ENCODE measurements at regions of chr10 and their contacts with region 1.

Region 1: GRCh38 chr10:101818119-101818871 is at the start of gene OGA:
- DNase-seq: peak; percentile 93 to 100 (median 98)
- ATAC-seq: peak; percentile 90 to 91
- H3K4me3 Mint-ChIP-seq: peak within 1 kb of the TSS; percentile 94 to 100 (median 98)
- H3K27ac Mint-ChIP-seq: peak within 1 kb of the TSS; percentile 96 to 99 (median 98)
- H3K4me1 Mint-ChIP-seq: peaks cover 37 to 59% (median 46%) of the 10 kb centered on the region in 4 donors
- H3K27me3 Mint-ChIP-seq: peaks cover 0 to 2% (median 0%) of the 10 kb centered on the region in 5 donors
- polyA plus RNA-seq, gene OGA: 35.7 to 43.7 (median 41.9) TPM

Region 2: DNA sequence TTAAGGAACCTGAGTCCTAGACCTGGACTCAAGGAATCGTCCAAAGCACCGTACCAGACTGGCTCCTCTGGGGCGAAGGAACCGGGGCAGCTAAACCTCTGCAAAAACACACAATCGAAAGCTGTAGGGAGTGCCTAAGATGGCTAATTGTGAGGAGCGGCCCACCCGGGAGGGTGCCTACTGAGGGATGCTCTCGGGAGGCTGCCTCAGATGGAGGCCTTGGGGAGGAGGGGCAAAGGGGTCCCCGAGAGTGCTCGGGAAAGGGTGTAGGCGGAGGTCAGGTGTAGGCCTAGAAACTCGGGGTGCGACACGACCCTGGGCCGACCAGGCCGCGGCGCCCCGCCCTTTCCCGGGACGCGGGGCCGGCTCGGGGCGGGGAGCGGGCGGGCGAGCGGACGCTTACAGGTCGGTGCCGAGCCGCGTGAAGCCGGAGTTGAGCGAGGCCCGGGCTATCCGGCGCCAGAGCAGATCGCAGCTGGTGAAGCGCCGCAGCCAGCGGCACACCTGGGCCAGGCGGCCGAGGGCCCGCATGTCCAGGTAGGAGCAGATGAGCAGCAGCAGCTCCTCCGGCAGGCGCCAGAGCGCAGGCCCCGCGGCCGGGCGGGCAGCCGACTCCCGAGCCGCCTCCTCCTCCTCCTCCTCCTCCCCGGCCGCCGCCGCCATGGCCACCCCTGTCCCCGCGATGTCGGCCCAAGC is 124.2 kb before region 1 on chr10:
- POLR2A ChIA-PET with region 1: interaction called, 10 read pairs
- DNase-seq: peak; percentile 53 to 83 (median 71)
- ATAC-seq: peak; percentile 61 to 72
- H3K4me3 Mint-ChIP-seq: peak overlapping the region; percentile 94 to 99 (median 96)
- H3K27ac Mint-ChIP-seq: peak overlapping the region; percentile 96 to 100 (median 99)
- H3K4me1 Mint-ChIP-seq: peaks cover 18 to 50% (median 45%) of the 10 kb centered on the region in 4 donors
- H3K27me3 Mint-ChIP-seq: no peaks in the 10 kb centered on the region

Region 3: DNA sequence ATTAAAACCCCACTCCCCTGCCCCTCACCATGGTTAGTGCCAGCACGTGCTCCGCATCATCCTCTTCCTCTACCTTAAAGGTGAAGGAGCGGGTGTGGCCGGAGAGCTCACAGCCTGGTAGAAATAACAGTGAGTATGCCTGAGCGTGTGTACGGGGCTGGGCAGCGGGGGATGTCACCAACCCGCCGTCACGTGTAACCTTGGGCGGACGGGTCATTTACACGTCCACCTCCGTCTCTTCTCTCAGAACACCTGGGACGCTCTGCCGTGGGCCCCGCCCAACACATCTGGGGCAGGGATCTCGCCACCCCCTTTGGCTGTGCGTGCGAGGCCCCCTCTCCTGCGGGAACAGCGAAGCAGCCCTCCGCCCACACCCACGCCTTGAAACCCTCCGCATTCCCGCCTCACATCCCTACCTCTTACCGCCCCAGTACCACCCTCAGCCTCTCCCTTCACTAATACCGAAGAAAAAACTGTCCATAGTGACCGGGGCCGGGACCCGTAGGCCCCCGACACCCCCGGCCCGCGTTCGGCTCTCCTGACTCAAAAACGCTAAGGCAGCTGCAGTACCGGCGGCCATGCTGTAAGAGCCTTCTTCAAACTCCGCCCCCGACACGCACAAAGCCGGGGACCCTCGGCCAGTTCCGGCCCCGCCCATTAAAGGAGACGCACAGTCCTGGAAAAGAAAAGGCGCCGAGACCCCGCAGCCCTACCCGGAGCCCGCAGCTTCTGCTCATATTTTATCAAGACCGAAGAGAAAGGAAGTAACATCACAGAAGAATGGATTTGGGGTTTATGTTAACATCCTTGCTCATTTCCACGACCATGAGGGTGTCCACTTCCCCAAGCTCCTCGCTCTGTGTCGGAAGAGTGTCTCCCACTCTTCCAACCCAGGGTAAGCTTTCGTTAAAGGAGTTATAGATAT is 35.2 kb before region 1 on chr10 and contains the start of gene NPM3:
- POLR2A ChIA-PET with region 1: interaction called, 29 read pairs
- DNase-seq: peak; percentile 70 to 87 (median 76)
- ATAC-seq: peak; percentile 77 to 80
- H3K4me3 Mint-ChIP-seq: peak within 1 kb of the TSS; percentile 94 to 100 (median 100)
- H3K27ac Mint-ChIP-seq: peak within 1 kb of the TSS; percentile 90 to 99 (median 97)
- H3K4me1 Mint-ChIP-seq: peaks cover 37 to 74% (median 64%) of the 10 kb centered on the region in 4 donors
- H3K27me3 Mint-ChIP-seq: peaks cover 4 to 16% (median 9%) of the 10 kb centered on the region in 5 donors
- polyA plus RNA-seq, gene NPM3: 14.6 to 19.3 (median 18.9) TPM

Region 4: GRCh38 chr10:101807158-101807557 is 11.1 kb before region 1 on chr10:
- POLR2A ChIA-PET with region 1: interaction called, 15 read pairs
- DNase-seq: no peak
- ATAC-seq: no peak
- H3K4me3 Mint-ChIP-seq: no peak overlapping the region
- H3K27ac Mint-ChIP-seq: peak overlapping the region in 5 of 10 donors; percentile 23 to 76 (median 47)
- H3K4me1 Mint-ChIP-seq: peaks cover 5 to 42% (median 35%) of the 10 kb centered on the region in 4 donors
- H3K27me3 Mint-ChIP-seq: no peaks in the 10 kb centered on the region

Region 5: DNA sequence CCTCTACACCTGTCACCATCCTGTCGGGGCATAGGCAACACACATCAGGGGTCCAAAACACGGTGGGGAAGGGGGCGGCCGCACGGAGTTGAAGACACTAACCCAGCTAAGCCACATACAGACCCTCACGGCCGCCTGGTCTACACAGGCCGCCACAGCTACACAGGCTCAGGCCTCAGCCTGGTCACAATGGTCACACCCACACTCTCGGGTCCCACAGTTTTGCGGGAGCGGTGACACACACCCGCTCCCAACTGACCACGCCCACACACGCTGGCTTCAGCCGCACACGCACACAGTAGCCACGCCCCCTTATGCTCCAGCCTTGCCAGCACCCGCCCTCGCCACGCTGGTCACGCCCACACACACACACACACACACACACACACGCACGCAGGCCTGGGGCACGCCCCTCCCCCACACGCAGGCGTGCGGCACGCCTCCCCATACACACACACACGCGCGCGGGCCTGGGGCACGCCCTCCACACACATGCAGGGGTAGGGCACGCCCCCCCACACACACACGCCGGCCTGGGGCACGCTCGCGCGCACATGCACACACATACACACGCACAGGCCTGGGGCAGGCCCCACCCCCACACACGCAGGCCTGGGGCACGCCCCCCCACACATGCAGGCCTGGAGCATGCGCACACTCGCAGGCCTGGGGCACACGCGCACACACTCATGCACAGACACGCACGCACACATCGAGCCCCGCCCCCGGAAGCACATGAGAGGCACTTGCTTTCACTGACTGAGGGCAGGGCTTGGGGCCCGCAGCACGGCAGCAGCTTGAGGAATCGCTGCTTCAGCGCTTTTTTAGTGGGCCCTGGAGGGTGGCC is 12.2 kb after region 1 on chr10:
- POLR2A ChIA-PET with region 1: interaction called, 118 read pairs
- DNase-seq: peak; percentile 87 to 98 (median 95)
- ATAC-seq: peak; percentile 80 to 81
- H3K4me3 Mint-ChIP-seq: peak overlapping the region; percentile 74 to 96 (median 90)
- H3K27ac Mint-ChIP-seq: peak overlapping the region; percentile 94 to 100 (median 99)
- H3K4me1 Mint-ChIP-seq: peaks cover 44 to 64% (median 52%) of the 10 kb centered on the region in 4 donors
- H3K27me3 Mint-ChIP-seq: peaks cover 0 to 3% (median 0%) of the 10 kb centered on the region in 5 donors

Region 6: DNA sequence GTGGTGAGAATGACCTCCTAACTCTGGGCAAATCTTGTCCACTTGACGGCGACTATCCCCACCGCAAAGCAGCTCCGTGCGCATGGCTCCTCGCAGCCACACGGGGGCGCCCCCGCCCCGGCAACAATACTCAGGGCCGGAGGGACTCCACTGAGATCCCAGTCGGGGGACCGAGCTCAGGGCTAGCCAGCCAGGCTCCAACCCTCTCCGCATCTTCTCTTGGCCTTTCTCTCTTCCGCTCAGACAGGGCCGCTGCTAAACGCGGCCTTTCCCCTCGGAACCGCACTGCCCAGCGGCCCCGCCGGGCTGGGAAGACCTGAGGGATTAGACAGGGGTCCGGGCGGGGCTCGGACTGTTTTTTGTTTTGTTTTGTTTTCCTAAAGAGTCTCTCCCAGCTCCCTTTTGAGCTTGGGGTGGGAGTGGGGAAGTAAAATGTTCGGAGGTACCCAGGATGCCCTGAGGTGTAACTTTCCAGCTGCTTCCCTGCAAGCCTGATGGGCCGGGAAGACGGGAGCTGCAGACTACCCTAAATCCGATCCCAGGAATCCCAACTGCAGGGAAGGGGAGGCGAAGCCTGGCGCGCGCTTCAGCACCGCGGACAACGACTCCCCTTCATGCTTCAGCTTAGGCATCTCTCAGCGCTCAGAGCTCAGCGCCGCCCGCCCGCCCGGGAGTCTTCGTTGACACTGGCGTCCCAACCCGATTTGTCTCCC is 22.6 kb after region 1 on chr10:
- POLR2A ChIA-PET with region 1: interaction called, 50 read pairs
- DNase-seq: peak; percentile 39 to 79 (median 60)
- ATAC-seq: peak; percentile 58 to 59
- H3K4me3 Mint-ChIP-seq: peak overlapping the region; percentile 72 to 94 (median 90)
- H3K27ac Mint-ChIP-seq: peak overlapping the region in 7 of 10 donors; percentile 47 to 84 (median 68)
- H3K4me1 Mint-ChIP-seq: peaks cover 40 to 71% (median 55%) of the 10 kb centered on the region in 4 donors
- H3K27me3 Mint-ChIP-seq: peaks cover 0 to 4% (median 3%) of the 10 kb centered on the region in 5 donors

Region 7: DNA sequence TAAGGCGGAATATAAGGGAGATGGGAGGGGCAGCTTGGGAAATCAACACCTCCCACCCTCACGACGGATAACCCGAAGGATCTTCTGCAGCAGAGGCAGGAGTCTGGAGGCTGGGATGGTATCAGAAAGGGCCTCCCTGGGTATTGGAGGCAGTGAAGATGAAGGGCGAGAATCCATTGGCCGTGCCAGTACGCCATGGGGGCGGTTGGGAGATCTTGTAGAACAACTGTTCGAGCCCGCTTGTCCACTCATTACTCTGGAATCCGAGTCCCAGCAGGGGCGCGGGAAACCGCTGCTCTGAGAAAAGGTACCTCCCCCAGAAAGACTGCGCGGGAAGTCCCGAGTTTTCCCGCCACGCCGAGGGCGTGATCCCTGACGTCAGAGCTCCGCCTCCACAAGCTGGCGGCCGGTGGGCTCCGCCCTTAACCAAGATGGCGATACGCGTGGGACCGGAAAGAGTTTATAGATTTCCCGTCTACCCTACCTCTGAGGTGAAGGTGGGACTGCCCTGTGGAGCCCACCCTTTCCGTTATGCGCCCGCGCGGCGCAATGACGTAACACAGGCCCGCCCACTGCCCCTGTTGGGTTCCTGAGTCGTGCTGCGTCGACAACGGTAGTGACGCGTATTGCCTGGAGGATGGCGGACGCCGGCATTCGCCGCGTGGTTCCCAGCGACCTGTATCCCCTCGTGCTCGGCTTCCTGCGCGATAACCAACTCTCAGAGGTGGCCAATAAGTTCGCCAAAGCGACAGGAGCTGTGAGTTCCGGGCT is 333.7 kb after region 1 on chr10 and contains the start of gene NOLC1:
- POLR2A ChIA-PET with region 1: interaction called, 11 read pairs
- DNase-seq: peak; percentile 95 to 100 (median 100)
- ATAC-seq: peak; percentile 93 to 94
- H3K4me3 Mint-ChIP-seq: peak within 1 kb of the TSS; percentile 88 to 98 (median 96)
- H3K27ac Mint-ChIP-seq: peak within 1 kb of the TSS; percentile 89 to 99 (median 96)
- H3K4me1 Mint-ChIP-seq: peaks cover 28 to 52% (median 48%) of the 10 kb centered on the region in 4 donors
- H3K27me3 Mint-ChIP-seq: no peaks in the 10 kb centered on the region
- polyA plus RNA-seq, gene NOLC1: 44.1 to 87.9 (median 74.0) TPM

Measured in naive thymus-derived CD8-positive, alpha-beta T cell (primary cell).